ENCODE measurements at regions of chr11 and their contacts with region 1.

Region 1: DNA sequence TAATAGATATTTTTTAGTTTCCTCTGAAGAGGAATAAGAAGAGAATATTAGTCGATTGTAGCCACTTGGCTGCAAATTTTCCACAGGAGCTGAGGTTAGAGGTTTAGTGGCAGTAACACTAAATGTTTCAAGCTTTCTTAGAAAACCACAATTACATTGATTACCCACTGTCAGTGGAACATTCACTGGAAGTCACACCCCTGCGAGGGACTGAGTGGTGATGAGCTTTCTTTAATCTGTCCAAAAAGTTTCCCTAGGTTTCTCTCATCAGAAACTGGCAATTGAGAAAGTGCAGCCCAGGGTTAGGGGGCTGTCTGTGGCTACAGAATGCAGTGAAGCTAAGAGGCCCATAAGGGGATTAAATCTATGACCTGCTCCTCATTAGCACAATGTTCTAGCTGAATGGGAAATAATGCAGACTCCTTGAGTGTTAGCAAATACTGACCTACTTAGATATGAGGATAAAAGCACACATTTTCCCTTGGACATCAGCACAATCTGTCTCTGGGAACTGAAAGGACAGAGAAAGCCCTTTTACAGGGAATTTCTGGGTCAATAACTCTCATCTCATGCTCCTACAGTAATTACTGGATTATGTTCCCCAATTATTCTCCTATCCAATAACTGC is 189.5 kb downstream of the FAM76B start:
- DNase-seq: no peak
- ATAC-seq: no peak
- H3K4me3 ChIP-seq: no peak overlapping the region
- H3K27ac ChIP-seq: no peak overlapping the region
- H3K4me1 ChIP-seq: peaks cover 4% of the 10 kb centered on the region; the same call in 1 of the 2 replicates
- H3K27me3 ChIP-seq: no peaks in the 10 kb centered on the region
- CTCF ChIP-seq: no peak
- POLR2A ChIP-seq: no peak
- RAD21 ChIP-seq: no peak

Region 2: GRCh38 chr11:95499516-95500135 is 100.4 kb before region 1 on chr11:
- CTCF ChIA-PET with region 1: no interaction called
- POLR2A ChIA-PET with region 1: no interaction called
- dilution Hi-C with region 1: no loop called
- in situ Hi-C with region 1: no loop called
- intact Hi-C with region 1: no loop called
- DNase-seq: peak; percentile 4
- ATAC-seq: peak; percentile 70
- H3K4me3 ChIP-seq: no peak overlapping the region
- H3K27ac ChIP-seq: no peak overlapping the region
- H3K4me1 ChIP-seq: no peaks in the 10 kb centered on the region; the same call in 1 of the 2 replicates
- H3K27me3 ChIP-seq: peaks cover 8% of the 10 kb centered on the region
- CTCF ChIP-seq: no peak
- POLR2A ChIP-seq: no peak
- RAD21 ChIP-seq: no peak

Region 3: GRCh38 chr11:95638501-95638900 is 38.4 kb after region 1 on chr11:
- CTCF ChIA-PET with region 1: no interaction called
- POLR2A ChIA-PET with region 1: no interaction called
- dilution Hi-C with region 1: no loop called
- in situ Hi-C with region 1: no loop called
- intact Hi-C with region 1: loop called (anchors 5 kb)
- DNase-seq: no peak
- ATAC-seq: no peak
- H3K4me3 ChIP-seq: no peak overlapping the region
- H3K27ac ChIP-seq: no peak overlapping the region
- H3K4me1 ChIP-seq: no peaks in the 10 kb centered on the region
- H3K27me3 ChIP-seq: no peaks in the 10 kb centered on the region
- CTCF ChIP-seq: no peak
- POLR2A ChIP-seq: no peak
- RAD21 ChIP-seq: no peak

Measured in IMR-90 (cell line).